ENCODE measurements at regions of chr15 and their contacts with region 1.

Region 1: DNA sequence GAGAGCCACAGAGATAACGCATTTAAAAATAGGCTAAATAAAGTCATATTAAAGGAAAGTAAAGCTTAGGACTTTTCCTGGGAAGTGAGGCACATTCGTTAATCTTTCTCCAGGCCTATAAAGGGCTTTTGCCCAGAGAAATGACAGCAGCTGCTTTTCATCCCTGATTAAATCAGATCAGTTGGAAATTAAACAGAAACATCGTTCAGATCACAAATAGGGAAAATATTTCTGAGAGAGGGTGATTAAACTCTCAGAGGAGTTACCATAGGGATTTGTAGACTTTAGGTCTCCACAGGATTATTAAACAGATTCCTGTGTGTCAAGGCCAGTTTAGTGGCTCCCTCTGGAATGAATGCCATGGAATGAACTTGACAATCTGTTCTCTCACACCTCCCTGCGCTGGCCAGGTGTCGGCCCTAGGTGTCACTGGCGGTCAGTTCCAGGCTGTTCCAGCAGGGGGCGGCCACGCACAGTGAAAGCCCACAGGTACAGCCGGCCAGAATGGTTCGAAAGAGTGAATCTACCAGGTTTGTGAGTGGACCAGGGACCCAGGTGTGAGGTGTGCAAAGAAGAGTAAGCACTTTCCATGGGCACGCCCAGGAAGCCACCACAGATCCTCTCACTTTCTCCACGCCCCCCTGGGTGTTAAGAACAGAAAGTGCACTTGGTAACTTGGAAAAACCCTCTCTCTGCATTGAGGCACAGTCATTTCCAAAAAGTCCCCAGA is 253.0 kb upstream of the RASGRP1 start:
- DNase-seq: peak; percentile 91
- ATAC-seq: peak; percentile 100
- H3K4me3 ChIP-seq: no peak overlapping the region; the same call in 1 of the 2 replicates
- H3K27ac ChIP-seq: no peak overlapping the region
- H3K4me1 ChIP-seq: peaks cover 4% of the 10 kb centered on the region; the same call in 1 of the 2 replicates
- H3K27me3 ChIP-seq: no peaks in the 10 kb centered on the region
- CTCF ChIP-seq: peak; percentile 100

Region 2: DNA sequence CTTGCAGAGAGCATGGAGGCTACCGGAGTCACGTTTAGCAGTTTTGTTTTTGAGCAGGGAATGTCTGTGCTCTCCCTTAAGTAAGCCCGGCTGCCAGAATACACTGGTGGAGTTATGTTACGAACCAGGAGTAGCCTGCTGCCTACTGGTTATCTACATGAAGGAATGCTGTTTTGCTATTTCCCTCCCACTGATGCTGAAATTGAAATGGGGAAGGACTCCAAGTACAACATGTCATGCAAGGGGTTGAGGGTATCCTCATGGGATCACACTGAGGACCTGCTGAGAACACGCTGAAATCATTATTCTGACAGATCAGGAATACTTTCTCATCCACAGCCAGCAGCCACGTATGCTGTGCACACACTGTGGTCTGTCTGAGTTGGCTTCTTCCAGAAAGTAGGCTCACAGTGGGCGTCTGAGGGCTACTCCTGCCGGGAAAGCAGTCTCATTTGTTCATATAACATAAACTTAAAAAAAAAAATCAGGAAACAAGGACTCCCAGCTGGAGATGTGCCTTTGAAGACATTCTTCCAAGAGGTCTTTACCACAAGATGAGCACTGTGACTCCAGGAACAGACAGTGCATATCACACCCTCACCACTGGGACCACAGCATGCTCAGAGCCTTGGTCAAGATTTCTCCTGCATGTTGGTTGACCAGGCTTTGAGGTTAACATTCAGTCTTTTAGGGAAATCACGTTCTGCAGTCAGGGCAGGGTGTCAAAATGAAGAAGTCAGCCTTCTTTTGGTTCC is 47.4 kb after region 1 on chr15:
- CTCF ChIA-PET with region 1: no interaction called
- POLR2A ChIA-PET with region 1: no interaction called
- intact Hi-C with region 1: loop called (anchors 2 kb)
- DNase-seq: no peak
- ATAC-seq: no peak
- H3K4me3 ChIP-seq: no peak overlapping the region
- H3K27ac ChIP-seq: no peak overlapping the region
- H3K4me1 ChIP-seq: peaks cover 14% of the 10 kb centered on the region
- H3K27me3 ChIP-seq: no peaks in the 10 kb centered on the region
- CTCF ChIP-seq: no peak

Region 3: DNA sequence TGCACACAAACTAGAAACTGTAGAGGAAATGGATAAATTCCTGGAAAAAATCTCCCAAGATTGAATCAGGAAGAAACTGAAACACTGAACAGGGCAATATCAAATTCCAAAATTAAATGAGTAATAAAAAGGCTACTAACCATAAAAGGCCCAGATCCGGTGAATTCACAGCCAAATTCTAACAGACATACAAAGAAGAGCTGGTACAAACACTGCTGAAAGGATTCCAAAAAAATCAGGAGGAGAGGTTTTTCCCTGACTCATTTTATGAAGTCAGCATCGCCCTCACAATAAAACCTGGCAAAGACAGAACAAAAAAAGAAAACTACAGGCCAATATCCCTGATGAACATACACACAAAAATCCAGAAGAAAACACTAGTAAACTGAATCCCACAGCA is 300.9 kb after region 1 on chr15:
- CTCF ChIA-PET with region 1: no interaction called
- POLR2A ChIA-PET with region 1: no interaction called
- intact Hi-C with region 1: loop called (anchors 1 kb)
- DNase-seq: peak; percentile 92
- ATAC-seq: peak; percentile 91
- H3K4me3 ChIP-seq: no peak overlapping the region
- H3K27ac ChIP-seq: peak overlapping the region; percentile 60
- H3K4me1 ChIP-seq: peaks cover 23% of the 10 kb centered on the region
- H3K27me3 ChIP-seq: no peaks in the 10 kb centered on the region
- CTCF ChIP-seq: no peak

Region 4: DNA sequence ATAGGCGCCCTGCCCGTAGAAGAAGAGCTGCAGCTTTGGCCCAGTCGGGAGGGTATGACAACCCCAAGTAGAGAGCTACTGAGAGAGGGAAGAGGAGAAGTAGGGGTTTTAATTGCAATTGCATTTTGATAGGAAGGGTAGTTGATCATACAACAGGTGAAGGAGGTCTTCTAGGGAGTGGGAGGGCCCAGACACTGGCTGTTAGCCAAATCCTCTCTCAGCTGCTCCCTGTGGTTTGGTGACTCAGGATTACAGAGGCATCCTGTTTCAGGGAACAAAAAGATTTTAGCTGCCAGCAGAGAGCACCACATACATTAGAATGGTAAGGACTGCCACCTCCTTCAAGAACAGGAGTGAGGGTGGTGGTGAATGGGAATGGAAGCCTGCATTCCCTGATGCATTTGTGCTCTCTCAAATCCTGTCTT is 354.4 kb after region 1 on chr15:
- CTCF ChIA-PET with region 1: no interaction called
- POLR2A ChIA-PET with region 1: interaction called, 3 read pairs
- intact Hi-C with region 1: loop called (anchors 1 kb)
- DNase-seq: peak; percentile 98
- ATAC-seq: peak; percentile 99
- H3K4me3 ChIP-seq: no peak overlapping the region
- H3K27ac ChIP-seq: peak overlapping the region; percentile 77
- H3K4me1 ChIP-seq: peaks cover 25% of the 10 kb centered on the region
- H3K27me3 ChIP-seq: no peaks in the 10 kb centered on the region
- CTCF ChIP-seq: peak; percentile 81

Region 5: DNA sequence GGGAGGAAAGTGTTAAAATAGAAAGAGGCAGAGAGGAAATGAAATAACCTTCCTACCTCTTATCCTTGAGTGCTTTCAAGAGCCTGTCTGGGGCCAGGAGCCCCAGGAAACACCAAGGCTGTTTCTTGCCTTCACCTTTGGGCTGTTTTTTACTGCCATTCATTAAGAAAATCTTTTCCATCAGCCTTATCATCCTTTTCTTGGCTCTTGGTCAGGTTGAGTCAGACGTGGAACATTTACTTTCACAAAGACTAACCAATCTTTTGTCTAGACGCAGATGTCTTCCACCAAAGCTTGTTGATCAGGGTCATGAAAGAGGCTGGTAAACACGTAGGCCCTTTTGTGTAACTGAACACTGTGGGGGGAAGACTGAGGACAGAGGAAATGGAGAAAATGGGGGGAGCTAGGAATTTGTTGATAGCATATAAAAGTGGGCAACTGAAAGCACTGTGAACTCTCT is 612.3 kb after region 1 on chr15:
- CTCF ChIA-PET with region 1: no interaction called
- POLR2A ChIA-PET with region 1: no interaction called
- intact Hi-C with region 1: loop called (anchors 10 kb)
- DNase-seq: peak; percentile 86
- ATAC-seq: peak; percentile 86
- H3K4me3 ChIP-seq: no peak overlapping the region
- H3K27ac ChIP-seq: peak overlapping the region; percentile 27
- H3K4me1 ChIP-seq: peaks cover 17% of the 10 kb centered on the region
- H3K27me3 ChIP-seq: no peaks in the 10 kb centered on the region
- CTCF ChIP-seq: no peak

Measured in PC-3 (cell line).